CD14-positive monocyte (primary cell): ENCODE measurements at regions of chr5 and their contacts with region 1.

Region 1: GRCh38 chr5:124859027-124859426 is 112.6 kb upstream of the ZNF608 start:
- DNase-seq: peak; percentile 63 to 94 (median 69)
- H3K4me3 ChIP-seq: peak overlapping the region in 2 of 3 experiments; percentile 10 to 53
- H3K4me3 Mint-ChIP-seq: peak overlapping the region; percentile 40 to 79
- H3K27ac ChIP-seq: peak overlapping the region; percentile 62 to 74
- H3K27ac Mint-ChIP-seq: peak overlapping the region; percentile 25 to 88 (median 84)
- H3K4me1 ChIP-seq: peaks cover 28 to 30% of the 10 kb centered on the region in 2 donors
- H3K4me1 Mint-ChIP-seq: peaks cover 30% of the 10 kb centered on the region
- H3K27me3 ChIP-seq: no peaks in the 10 kb centered on the region
- H3K27me3 Mint-ChIP-seq: no peaks in the 10 kb centered on the region
- CTCF ChIP-seq: no peak

Region 2: GRCh38 chr5:124576848-124577409 is 282.1 kb before region 1 on chr5:
- intact Hi-C with region 1: no loop called
- DNase-seq: no peak
- H3K4me3 ChIP-seq: no peak overlapping the region
- H3K4me3 Mint-ChIP-seq: no peak overlapping the region
- H3K27ac ChIP-seq: no peak overlapping the region
- H3K27ac Mint-ChIP-seq: no peak overlapping the region
- H3K4me1 ChIP-seq: no peaks in the 10 kb centered on the region
- H3K4me1 Mint-ChIP-seq: no peaks in the 10 kb centered on the region
- H3K27me3 ChIP-seq: no peaks in the 10 kb centered on the region
- H3K27me3 Mint-ChIP-seq: peaks cover 0 to 4% (median 3%) of the 10 kb centered on the region in 3 donors
- CTCF ChIP-seq: no peak

Region 3: DNA sequence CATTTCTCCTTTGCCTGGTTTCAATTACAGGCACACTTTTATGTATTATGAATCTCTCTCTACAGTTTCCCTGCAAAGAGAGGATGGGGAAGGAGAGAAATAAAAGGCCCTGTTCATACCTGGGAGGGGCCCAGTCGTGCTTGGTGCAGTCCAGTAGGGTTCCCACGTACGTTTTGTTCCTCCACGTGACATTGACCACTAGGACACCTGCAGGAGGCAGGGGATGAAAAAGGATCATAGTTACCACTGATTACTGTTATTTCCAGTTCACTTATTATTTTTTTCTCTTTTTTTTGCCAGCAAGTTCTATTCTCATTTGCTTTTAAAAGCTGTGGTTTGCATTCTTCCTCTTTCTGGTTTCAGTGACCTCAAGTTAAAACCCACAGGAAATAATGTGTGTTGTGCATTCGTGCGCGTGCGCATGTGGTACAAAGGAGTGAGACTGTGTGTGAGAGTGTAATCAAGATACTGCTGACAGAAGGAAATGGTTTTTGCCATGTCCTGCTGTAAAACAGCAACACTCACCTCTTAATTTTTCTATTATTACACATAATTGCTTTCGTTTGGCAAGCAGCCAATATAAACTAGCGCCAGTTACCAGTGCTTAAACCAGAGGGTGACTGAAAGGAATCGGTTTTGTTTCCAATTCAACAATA is 209.4 kb before region 1 on chr5:
- intact Hi-C with region 1: loop called in 1 of 2 experiments (anchors 5 kb)
- DNase-seq: peak; percentile 93 to 96 (median 94)
- H3K4me3 ChIP-seq: peak overlapping the region in 2 of 3 experiments; percentile 2 to 61
- H3K4me3 Mint-ChIP-seq: peak overlapping the region; percentile 17 to 86
- H3K27ac ChIP-seq: no peak overlapping the region
- H3K27ac Mint-ChIP-seq: peak overlapping the region in 6 of 7 donors; percentile 46 to 84 (median 78)
- H3K4me1 ChIP-seq: peaks cover 40 to 42% of the 10 kb centered on the region in 2 donors
- H3K4me1 Mint-ChIP-seq: peaks cover 41% of the 10 kb centered on the region
- H3K27me3 ChIP-seq: peaks cover 77 to 87% of the 10 kb centered on the region in 2 donors
- H3K27me3 Mint-ChIP-seq: peaks cover 47 to 77% (median 54%) of the 10 kb centered on the region in 3 donors
- CTCF ChIP-seq: no peak

Region 4: DNA sequence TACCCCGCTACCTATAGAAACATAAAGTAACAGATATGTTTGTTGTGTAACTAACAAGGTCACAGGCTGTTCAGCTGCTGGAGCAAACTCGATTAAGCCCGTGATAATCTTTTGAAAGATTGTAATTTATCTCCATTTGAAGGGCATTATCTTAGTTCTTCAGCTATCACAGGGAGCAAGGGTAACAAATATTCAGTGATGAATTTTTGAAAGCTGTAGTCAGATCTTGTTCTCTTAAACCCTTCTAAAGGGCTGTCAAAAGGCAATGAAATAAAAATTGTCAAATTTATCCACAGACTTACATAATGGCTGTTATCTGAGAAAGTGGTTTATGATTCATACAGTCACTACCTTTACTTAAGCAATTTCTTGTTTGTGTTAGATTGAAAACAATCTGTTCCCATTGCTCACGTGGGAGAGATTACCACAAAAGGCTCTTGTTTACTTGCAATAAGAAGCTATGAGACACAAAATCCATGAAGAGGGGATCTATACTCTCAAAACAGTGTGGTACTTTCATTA is 34.3 kb before region 1 on chr5:
- intact Hi-C with region 1: no loop called
- DNase-seq: peak in 1 of 3 donors; percentile 5
- H3K4me3 ChIP-seq: no peak overlapping the region
- H3K4me3 Mint-ChIP-seq: no peak overlapping the region
- H3K27ac ChIP-seq: no peak overlapping the region
- H3K27ac Mint-ChIP-seq: no peak overlapping the region
- H3K4me1 ChIP-seq: peaks cover 3 to 10% of the 10 kb centered on the region in 2 donors
- H3K4me1 Mint-ChIP-seq: peaks cover 15% of the 10 kb centered on the region
- H3K27me3 ChIP-seq: no peaks in the 10 kb centered on the region
- H3K27me3 Mint-ChIP-seq: no peaks in the 10 kb centered on the region
- CTCF ChIP-seq: no peak

Region 5: GRCh38 chr5:124912638-124913328 is 53.8 kb after region 1 on chr5:
- intact Hi-C with region 1: loop called in 1 of 2 experiments (anchors 10 kb)
- DNase-seq: peak in 2 of 3 donors; percentile 16 to 45
- H3K4me3 ChIP-seq: peak overlapping the region in 1 of 3 experiments; percentile 62
- H3K4me3 Mint-ChIP-seq: peak overlapping the region; percentile 68 to 87
- H3K27ac ChIP-seq: peak overlapping the region in 1 of 2 donors; percentile 3
- H3K27ac Mint-ChIP-seq: peak overlapping the region in 3 of 7 donors; percentile 62 to 68 (median 65)
- H3K4me1 ChIP-seq: peaks cover 27 to 36% of the 10 kb centered on the region in 2 donors
- H3K4me1 Mint-ChIP-seq: peaks cover 44% of the 10 kb centered on the region
- H3K27me3 ChIP-seq: no peaks in the 10 kb centered on the region
- H3K27me3 Mint-ChIP-seq: peaks cover 0 to 2% (median 1%) of the 10 kb centered on the region in 3 donors
- CTCF ChIP-seq: no peak

Region 6: DNA sequence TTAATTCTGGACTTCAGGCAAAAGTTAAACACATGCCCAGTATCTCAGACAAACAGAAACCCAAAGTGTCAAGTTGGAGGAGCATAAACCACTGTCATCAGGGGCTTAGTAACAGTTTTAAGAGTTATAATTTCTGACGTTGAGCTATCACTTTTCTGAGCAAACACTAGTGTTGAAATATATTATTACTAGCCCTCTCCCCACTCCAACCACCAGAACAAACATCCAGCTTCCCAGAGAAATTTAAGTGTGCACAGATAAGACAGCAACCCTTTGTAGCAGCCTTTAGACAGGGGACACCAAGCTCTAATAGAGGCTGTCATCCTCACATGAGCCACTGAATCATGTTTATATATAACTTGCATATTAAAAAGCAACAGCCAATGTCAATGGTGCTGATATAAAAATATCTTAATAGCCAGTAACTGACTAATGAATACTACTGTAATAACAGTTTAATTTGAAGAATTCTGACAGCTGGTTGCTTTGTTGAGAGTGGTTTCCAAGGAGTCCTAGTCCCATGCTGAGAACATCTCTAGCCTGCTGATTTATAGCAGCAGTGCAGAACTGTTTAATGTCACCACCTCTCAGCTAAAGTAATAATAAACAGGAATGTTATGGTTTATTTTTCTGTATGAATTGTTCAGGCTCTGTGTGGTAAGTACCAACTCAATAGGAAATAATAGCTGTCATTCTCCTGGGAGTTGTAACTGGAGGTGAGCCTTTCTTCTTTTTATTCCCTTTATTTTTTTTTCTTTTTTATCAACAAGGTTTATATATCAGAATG is 416.1 kb after region 1 on chr5:
- intact Hi-C with region 1: no loop called
- DNase-seq: no peak
- H3K4me3 ChIP-seq: no peak overlapping the region
- H3K4me3 Mint-ChIP-seq: no peak overlapping the region
- H3K27ac ChIP-seq: no peak overlapping the region
- H3K27ac Mint-ChIP-seq: no peak overlapping the region
- H3K4me1 ChIP-seq: no peaks in the 10 kb centered on the region
- H3K4me1 Mint-ChIP-seq: no peaks in the 10 kb centered on the region
- H3K27me3 ChIP-seq: no peaks in the 10 kb centered on the region
- H3K27me3 Mint-ChIP-seq: peaks cover 0 to 5% (median 0%) of the 10 kb centered on the region in 3 donors
- CTCF ChIP-seq: no peak